A549 (cell line): ENCODE measurements at regions of chr3 and their contacts with region 1.

Region 1: GRCh38 chr3:115783938-115784738 is 160.8 kb downstream of the GAP43 start:
- DNase-seq: peak; percentile 90 to 94
- ATAC-seq: peak; percentile 94
- H3K4me3 ChIP-seq: peak overlapping the region; percentile 69
- H3K27ac ChIP-seq: peak overlapping the region; percentile 86 to 87
- H3K4me1 ChIP-seq: peaks cover 25% of the 10 kb centered on the region
- CTCF ChIP-seq: peak; percentile 85
- EP300 ChIP-seq: no peak
- POLR2A ChIP-seq: peak; percentile 36
- RAD21 ChIP-seq: peak; percentile 59 to 65

Region 2: DNA sequence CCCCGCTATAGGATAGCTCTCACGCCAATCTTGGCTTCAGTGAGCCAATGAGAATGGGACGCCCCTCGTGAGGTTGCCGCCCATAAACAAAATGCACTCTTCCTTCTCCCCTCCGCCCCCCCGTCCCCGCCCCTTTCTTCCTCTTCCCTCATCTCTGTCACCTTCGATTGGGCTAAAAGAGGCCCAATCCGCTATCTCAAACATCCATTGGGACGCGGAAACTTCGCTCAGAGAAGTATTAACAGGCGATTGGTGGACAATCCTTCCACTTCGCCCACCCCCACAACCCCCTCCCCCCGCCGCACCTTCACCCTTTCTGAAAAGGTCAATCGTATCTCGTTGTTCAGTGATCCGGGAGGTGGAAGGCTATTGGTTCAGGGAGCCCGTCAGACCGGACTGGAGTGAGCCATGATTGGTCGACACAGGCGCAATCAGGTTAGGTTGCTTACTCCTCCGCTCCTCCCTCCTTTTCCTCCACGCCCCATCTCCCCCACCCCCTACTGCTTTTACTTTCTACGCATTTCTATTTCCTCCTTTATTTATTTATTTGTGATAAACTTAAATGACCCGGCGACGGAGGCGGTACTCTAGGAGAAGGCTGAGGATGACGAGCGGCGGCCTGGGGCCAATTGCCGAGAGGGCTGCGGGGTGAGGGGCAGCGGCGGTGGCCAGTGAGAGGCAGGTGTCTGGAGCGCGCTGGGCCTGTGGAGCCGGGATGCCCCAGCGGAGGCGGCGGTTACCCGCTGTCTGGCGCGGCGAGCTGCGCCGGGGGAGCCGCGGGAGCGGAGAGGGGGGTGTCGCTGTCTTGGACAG is 636.6 kb before region 1 on chr3:
- CTCF ChIA-PET with region 1: no interaction called
- POLR2A ChIA-PET with region 1: interaction called, 13 read pairs
- DNase-seq: peak; percentile 86 to 100
- ATAC-seq: peak; percentile 83 to 92
- H3K4me3 ChIP-seq: peak overlapping the region; percentile 78
- H3K27ac ChIP-seq: peak overlapping the region; percentile 87 to 97
- H3K4me1 ChIP-seq: peaks cover 14% of the 10 kb centered on the region
- CTCF ChIP-seq: no peak
- EP300 ChIP-seq: no peak
- POLR2A ChIP-seq: peak; percentile 73
- RAD21 ChIP-seq: 0 out of 5 replicates have a peak, but pooled peaks of 1 of the 2 experiments have one; percentile 15

Region 3: GRCh38 chr3:115692887-115693524 is 91.1 kb before region 1 on chr3:
- CTCF ChIA-PET with region 1: interaction called, 20 read pairs
- POLR2A ChIA-PET with region 1: interaction called, 10 read pairs
- DNase-seq: peak; percentile 65 to 77
- ATAC-seq: peak; percentile 99 to 100
- H3K4me3 ChIP-seq: no peak overlapping the region
- H3K27ac ChIP-seq: peak overlapping the region; percentile 30 to 42; a peak in 2 of 6 replicates
- H3K4me1 ChIP-seq: peaks cover 15% of the 10 kb centered on the region; the same call in 2 of the 3 replicates
- CTCF ChIP-seq: peak; percentile 92
- EP300 ChIP-seq: no peak
- POLR2A ChIP-seq: no peak
- RAD21 ChIP-seq: peak; percentile 97 to 98

Region 4: DNA sequence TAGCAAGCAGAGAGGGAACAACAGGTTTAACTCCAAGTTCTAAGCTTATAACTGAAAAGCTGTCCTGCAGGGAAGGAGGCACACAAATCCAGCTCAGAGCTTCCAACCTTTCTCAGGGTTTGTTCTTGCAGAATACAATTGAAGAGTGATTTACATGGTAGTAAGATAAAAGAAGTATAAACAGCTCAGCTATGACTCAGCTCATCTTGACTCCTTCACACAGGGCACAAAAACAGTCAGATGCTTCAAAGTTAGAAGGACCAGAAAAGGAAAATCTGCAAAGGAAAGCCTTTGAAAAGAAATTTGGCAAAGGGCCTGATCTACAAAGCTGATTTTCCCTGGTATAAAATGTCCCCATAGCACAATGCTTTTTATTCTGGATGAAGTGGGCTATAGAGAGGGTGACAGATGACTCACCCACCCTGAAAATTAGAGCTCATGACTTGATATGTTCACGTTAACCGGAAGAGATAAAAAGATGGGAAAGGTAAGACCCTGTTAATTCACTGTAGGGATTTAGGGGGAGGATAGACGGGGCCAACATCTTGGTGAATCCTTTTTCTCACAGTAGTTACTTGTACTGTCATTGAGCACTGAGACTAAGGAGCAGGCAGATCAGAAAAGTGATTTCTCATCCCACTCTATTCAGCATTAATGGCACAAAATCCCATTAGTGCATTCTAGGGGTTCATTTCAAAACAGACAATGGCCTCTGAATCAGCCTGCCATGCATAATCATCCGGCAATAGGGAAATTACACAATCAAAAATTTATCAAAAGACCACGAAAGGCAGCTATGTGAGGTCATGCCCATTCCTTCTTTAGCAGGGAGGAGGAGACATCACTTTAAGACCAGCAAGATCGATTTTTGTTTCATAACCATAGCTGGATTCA is 17.3 kb before region 1 on chr3:
- CTCF ChIA-PET with region 1: interaction called, 14 read pairs
- POLR2A ChIA-PET with region 1: no interaction called
- DNase-seq: no peak
- ATAC-seq: peak in 1 of 2 experiments; percentile 41; a peak in 1 of 6 replicates
- H3K4me3 ChIP-seq: no peak overlapping the region
- H3K27ac ChIP-seq: peak overlapping the region in 1 of 2 experiments; percentile 14; a peak in 2 of 6 replicates
- H3K4me1 ChIP-seq: peaks cover 9% of the 10 kb centered on the region; the same call in 2 of the 3 replicates
- CTCF ChIP-seq: no peak
- EP300 ChIP-seq: no peak
- POLR2A ChIP-seq: no peak
- RAD21 ChIP-seq: no peak

Region 5: DNA sequence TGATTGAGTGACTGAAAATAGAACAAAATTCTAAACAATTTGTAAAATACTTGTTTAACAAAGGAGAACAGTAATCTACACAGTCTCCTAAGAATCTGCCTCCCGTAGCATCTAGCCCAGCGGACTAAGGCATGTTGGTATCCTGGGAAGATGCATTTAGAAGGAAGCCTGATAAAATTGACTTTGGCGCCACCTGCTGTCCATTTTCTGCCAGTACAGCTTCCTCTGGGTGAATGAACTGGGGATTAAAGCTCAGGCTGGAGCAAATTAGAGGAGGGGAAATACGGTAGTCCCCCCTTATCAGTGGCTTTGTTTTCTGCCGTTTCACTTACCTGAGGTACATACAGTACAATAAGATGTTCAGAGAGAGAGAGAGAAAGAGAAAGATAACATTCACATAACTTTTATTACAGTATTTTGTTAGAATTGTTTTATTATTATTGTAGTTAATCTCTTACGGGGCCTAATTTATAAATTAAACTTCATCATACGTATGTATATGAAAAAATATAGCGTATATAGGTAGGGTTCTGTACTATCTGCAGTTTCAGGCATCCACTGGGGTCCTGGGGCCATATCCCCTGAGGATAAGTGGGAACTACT is 30.7 kb after region 1 on chr3:
- CTCF ChIA-PET with region 1: interaction called, 61 read pairs
- POLR2A ChIA-PET with region 1: interaction called, 5 read pairs
- DNase-seq: peak; percentile 68 to 71
- ATAC-seq: peak; percentile 95
- H3K4me3 ChIP-seq: no peak overlapping the region
- H3K27ac ChIP-seq: no peak overlapping the region; a peak in 1 of 6 replicates
- H3K4me1 ChIP-seq: peaks cover 7% of the 10 kb centered on the region; the same call in 1 of the 3 replicates
- CTCF ChIP-seq: peak; percentile 90
- EP300 ChIP-seq: no peak
- POLR2A ChIP-seq: no peak
- RAD21 ChIP-seq: peak; percentile 94